ENCODE measurements at regions of chr21 and their contacts with region 1.

Region 1: GRCh38 chr21:31354604-31355443 is 10.8 kb upstream of the TIAM1 start:
- DNase-seq: peak; percentile 90
- H3K4me3 Mint-ChIP-seq: peak overlapping the region; percentile 33
- H3K27ac Mint-ChIP-seq: peak overlapping the region; percentile 91
- H3K4me1 Mint-ChIP-seq: peaks cover 49% of the 10 kb centered on the region
- H3K27me3 Mint-ChIP-seq: no peaks in the 10 kb centered on the region

Region 2: DNA sequence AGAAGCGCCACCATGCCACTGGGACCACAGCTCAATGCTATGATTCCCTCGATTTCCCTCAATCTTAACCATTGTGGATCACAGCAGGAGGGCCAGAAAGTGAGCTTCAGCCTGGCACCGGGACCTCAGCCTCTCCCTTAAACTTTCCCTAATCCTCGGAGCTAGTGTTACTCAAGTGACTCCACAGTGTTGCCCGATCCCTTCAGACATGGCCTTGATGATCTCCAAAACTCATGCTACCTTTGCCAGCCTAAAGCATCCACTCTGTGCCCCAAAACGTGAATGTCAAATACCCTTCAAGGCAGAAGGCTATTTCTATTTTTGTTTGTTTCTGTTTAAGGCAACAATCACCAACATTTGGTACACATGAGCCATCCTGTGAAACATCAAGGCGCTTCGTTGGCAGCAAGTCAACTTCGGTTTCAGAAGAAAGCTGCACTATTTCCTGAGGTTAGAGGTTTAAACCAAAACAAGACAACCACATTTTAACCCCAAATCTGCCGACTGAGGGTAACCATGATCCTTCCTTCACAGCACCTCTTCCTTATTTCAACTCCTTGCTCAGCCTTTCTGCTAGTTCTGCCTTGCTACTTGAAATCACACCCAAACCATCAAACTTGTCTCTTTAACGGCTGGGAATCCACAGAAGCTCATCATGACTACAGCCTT is 222.1 kb before region 1 on chr21:
- CTCF ChIA-PET with region 1: no interaction called
- POLR2A ChIA-PET with region 1: no interaction called
- intact Hi-C with region 1: loop called (anchors 1 kb)
- DNase-seq: peak; percentile 82
- H3K4me3 Mint-ChIP-seq: peak overlapping the region; percentile 64
- H3K27ac Mint-ChIP-seq: peak overlapping the region; percentile 95
- H3K4me1 Mint-ChIP-seq: peaks cover 65% of the 10 kb centered on the region
- H3K27me3 Mint-ChIP-seq: no peaks in the 10 kb centered on the region

Region 3: DNA sequence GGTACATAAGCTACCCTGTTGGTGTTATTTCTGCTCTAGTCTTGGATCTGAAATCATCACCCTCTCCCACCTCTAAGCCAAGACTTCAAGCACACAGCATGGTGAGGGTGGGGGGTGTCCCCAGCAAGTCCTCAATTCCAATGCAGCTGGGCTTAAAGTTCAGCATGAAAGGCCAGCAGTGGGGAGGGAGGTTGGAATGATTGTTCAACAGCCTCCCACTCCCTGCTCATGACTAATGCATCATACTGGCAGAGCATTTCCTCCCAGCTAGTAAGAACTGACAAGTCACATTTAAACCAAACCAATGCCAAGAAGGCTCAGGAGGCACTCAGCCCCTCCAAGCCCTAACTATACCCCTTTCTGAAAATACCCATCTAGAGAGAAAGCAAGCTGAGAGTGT is 60.8 kb before region 1 on chr21:
- CTCF ChIA-PET with region 1: no interaction called
- POLR2A ChIA-PET with region 1: interaction called, 4 read pairs
- intact Hi-C with region 1: loop called (anchors 1 kb)
- DNase-seq: peak; percentile 84
- H3K4me3 Mint-ChIP-seq: no peak overlapping the region
- H3K27ac Mint-ChIP-seq: peak overlapping the region; percentile 70
- H3K4me1 Mint-ChIP-seq: peaks cover 41% of the 10 kb centered on the region
- H3K27me3 Mint-ChIP-seq: no peaks in the 10 kb centered on the region

Region 4: DNA sequence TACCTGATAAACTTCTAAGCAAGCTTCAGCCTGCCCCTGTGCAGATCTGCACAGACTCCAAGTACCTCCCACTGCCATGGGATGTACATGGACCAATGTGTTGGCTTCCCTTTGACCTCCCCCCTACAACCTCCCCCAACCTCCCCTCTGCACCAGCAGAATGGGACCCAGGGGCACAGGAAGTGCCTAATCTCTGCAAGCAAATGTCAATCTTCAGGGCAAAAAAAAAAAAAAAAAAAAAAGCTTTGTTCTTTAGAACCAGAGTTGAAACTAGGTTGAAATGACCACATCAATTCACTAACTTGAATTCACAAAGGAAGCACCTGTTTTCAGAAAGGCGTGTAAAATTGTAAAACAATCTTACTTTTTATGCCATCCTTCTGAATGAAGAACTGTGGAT is 43.1 kb after region 1 on chr21:
- CTCF ChIA-PET with region 1: no interaction called
- POLR2A ChIA-PET with region 1: no interaction called
- intact Hi-C with region 1: loop called (anchors 1 kb)
- DNase-seq: peak; percentile 15
- H3K4me3 Mint-ChIP-seq: no peak overlapping the region
- H3K27ac Mint-ChIP-seq: no peak overlapping the region
- H3K4me1 Mint-ChIP-seq: peaks cover 34% of the 10 kb centered on the region
- H3K27me3 Mint-ChIP-seq: no peaks in the 10 kb centered on the region

Region 5: GRCh38 chr21:31558962-31559367 is 204.1 kb after region 1 on chr21:
- CTCF ChIA-PET with region 1: no interaction called
- POLR2A ChIA-PET with region 1: interaction called, 5 read pairs
- intact Hi-C with region 1: loop called (anchors 1 kb)
- DNase-seq: peak; percentile 95
- H3K4me3 Mint-ChIP-seq: peak overlapping the region; percentile 85
- H3K27ac Mint-ChIP-seq: no peak overlapping the region
- H3K4me1 Mint-ChIP-seq: peaks cover 30% of the 10 kb centered on the region
- H3K27me3 Mint-ChIP-seq: peaks cover 22% of the 10 kb centered on the region

Region 6: GRCh38 chr21:31731802-31732596 is 377.2 kb after region 1 on chr21 and contains the start of gene SCAF4:
- CTCF ChIA-PET with region 1: no interaction called
- POLR2A ChIA-PET with region 1: no interaction called
- intact Hi-C with region 1: loop called (anchors 5 kb)
- DNase-seq: peak; percentile 90
- H3K4me3 Mint-ChIP-seq: peak within 1 kb of the TSS; percentile 86
- H3K27ac Mint-ChIP-seq: peak within 1 kb of the TSS; percentile 76
- H3K4me1 Mint-ChIP-seq: peaks cover 6% of the 10 kb centered on the region
- H3K27me3 Mint-ChIP-seq: no peaks in the 10 kb centered on the region
- total RNA-seq, gene SCAF4: 38.0 to 39.4 TPM